Body of pancreas (tissue), 4 donors: ENCODE measurements at regions of chr1 and their contacts with region 1.

Region 1: GRCh38 chr1:175154629-175155472 is 37.7 kb downstream of the KIAA0040 start:
- DNase-seq: peak; percentile 71 to 82 (median 78)
- ATAC-seq: peak; percentile 66
- H3K4me3 ChIP-seq: no peak overlapping the region
- H3K27ac ChIP-seq: no peak overlapping the region
- H3K4me1 ChIP-seq: peaks cover 16% of the 10 kb centered on the region
- H3K27me3 ChIP-seq: no peaks in the 10 kb centered on the region
- CTCF ChIP-seq: peak; percentile 75 to 92 (median 88)
- POLR2A ChIP-seq: no peak

Region 2: DNA sequence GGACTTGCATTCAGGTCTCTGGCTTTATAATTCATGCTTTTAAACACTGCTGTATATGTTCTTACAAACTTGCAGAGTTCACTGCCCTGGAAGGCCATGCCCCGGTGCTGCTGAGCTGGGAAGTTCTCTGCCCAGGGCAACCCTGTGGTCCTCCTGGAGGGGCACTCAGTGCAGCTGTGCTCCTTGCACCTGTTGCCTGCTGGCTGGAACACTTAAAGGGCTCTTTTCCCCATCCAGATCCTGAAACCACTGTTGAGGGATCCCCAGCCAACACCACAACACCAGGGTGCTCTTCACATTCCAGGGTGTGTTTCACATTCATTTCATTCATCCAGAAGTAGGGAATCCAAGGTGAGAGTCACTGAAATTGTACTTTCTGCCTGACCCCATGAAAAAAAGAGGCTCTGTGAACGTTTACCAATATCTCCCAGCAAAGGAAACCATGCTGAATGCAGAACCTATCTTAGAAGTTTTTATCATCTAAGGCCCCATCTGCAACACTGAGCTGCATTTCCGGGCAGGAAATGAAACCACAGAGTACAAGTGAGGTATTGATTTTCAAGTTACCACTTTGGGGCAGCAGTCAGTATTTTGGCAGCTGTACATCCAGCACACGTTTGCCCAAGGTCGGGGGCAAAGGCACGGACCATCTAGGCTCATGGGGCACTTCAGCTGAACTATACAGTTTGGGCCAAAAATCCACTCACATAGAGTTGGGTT is 54.1 kb after region 1 on chr1:
- intact Hi-C with region 1: loop called (anchors 10 kb)
- DNase-seq: no peak
- ATAC-seq: no peak
- H3K4me3 ChIP-seq: no peak overlapping the region
- H3K27ac ChIP-seq: peak overlapping the region in 1 of 4 donors; percentile 30
- H3K4me1 ChIP-seq: no peaks in the 10 kb centered on the region
- H3K27me3 ChIP-seq: no peaks in the 10 kb centered on the region
- CTCF ChIP-seq: no peak
- POLR2A ChIP-seq: no peak

Region 3: GRCh38 chr1:175319418-175320230 is 164.8 kb after region 1 on chr1:
- intact Hi-C with region 1: loop called (anchors 5 kb)
- DNase-seq: peak; percentile 89 to 94 (median 90)
- ATAC-seq: peak; percentile 85
- H3K4me3 ChIP-seq: no peak overlapping the region
- H3K27ac ChIP-seq: peak overlapping the region; percentile 63 to 87 (median 85)
- H3K4me1 ChIP-seq: peaks cover 40% of the 10 kb centered on the region
- H3K27me3 ChIP-seq: no peaks in the 10 kb centered on the region
- CTCF ChIP-seq: peak; percentile 73 to 97 (median 94)
- POLR2A ChIP-seq: peak in 1 of 3 donors; percentile 28